Activated B cell treated with CpG ODN at 0.5 μM for 24 hours (primary cell): ENCODE measurements at regions of chr18 and their contacts with region 1.

Region 1: GRCh38 chr18:44851856-44852621 is 171.4 kb downstream of the SETBP1 start:
- DNase-seq: no peak
- ATAC-seq: no peak
- H3K4me3 Mint-ChIP-seq: no peak overlapping the region
- H3K27ac Mint-ChIP-seq: no peak overlapping the region
- H3K4me1 Mint-ChIP-seq: peaks cover 85% of the 10 kb centered on the region
- H3K27me3 Mint-ChIP-seq: no peaks in the 10 kb centered on the region
- CTCF ChIP-seq: no peak

Region 2: GRCh38 chr18:44341759-44342158 is 510.3 kb before region 1 on chr18:
- CTCF ChIA-PET with region 1: no interaction called
- POLR2A ChIA-PET with region 1: no interaction called
- intact Hi-C with region 1: no loop called
- DNase-seq: no peak
- ATAC-seq: no peak
- H3K4me3 Mint-ChIP-seq: no peak overlapping the region
- H3K27ac Mint-ChIP-seq: no peak overlapping the region
- H3K4me1 Mint-ChIP-seq: peaks cover 6% of the 10 kb centered on the region
- H3K27me3 Mint-ChIP-seq: peaks cover under 1% of the 10 kb centered on the region
- CTCF ChIP-seq: no peak

Region 3: DNA sequence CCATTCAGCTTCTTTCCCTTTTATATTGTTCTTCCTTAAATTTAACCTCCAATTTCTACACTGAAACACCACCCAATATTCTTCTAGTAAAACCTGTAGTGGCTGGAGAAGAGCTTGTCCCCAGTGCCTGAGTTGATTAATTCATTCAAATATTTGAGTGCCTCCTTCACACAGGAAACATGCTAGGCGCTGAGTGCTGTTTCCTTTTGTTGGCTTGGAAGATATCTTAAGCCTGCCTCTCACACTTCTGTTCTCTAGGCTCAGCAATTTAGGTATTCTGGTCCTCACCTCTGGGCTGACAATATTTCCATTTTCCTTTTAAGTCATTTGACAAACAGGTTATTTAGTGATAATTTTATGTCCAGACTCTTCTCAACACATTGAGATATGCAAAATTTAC is 14.1 kb after region 1 on chr18:
- CTCF ChIA-PET with region 1: no interaction called
- POLR2A ChIA-PET with region 1: no interaction called
- intact Hi-C with region 1: loop called (anchors 1 kb)
- DNase-seq: no peak
- ATAC-seq: no peak
- H3K4me3 Mint-ChIP-seq: no peak overlapping the region
- H3K27ac Mint-ChIP-seq: no peak overlapping the region
- H3K4me1 Mint-ChIP-seq: peaks cover 48% of the 10 kb centered on the region
- H3K27me3 Mint-ChIP-seq: no peaks in the 10 kb centered on the region
- CTCF ChIP-seq: no peak